ENCODE measurements at regions of chr2 and their contacts with region 1.

Region 1: DNA sequence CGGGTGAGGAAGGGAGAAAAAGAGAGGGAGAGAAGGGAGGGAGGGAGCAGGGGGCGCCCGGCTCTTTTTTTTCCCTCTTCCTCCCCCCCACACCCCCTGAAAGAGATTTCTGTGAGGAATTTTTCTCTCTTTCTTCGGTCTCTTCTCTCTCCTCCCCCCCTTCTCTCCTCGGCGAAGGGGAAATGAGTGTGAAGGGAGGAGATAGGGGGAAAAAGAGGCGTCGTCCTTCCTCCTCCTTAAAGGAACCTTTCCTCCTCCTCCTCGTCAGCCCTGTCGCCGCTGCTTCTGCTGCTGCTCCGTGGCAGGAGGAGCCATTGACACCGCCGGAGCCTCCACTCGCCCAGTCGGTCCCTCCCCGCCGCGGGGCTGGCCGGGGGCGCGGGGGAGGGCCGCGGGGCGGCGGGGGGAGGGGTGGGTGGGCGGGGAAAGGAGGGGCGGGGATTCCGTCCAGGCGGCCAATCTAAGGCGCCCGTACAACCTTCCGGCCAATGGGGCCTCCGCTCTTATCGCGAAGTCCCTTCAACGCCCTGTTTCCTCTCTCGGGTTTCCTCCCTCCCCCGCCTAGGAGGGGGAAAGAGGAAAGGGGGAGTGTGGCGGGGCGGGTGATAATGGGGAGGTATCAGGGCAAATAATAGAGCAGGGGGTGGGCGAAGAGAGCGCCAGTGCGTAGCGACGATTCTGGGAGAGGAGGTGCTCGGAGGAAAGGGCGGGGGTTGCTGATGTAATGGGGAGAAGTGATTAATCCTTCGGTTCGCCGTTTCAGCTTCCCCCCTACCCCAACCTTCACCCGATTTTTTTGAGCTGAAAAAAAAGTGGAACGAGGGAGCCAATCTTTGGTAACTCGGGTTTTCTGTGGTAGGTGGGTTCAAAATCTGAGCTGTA is at the start of gene FBXO11:
- DNase-seq: peak; percentile 98
- H3K4me3 Mint-ChIP-seq: peak within 1 kb of the TSS; percentile 91
- H3K27ac Mint-ChIP-seq: peak within 1 kb of the TSS; percentile 97
- H3K4me1 Mint-ChIP-seq: peaks cover 36% of the 10 kb centered on the region
- H3K27me3 Mint-ChIP-seq: no peaks in the 10 kb centered on the region
- total RNA-seq, gene FBXO11: 50.1 and 51.8 TPM in 2 replicates

Region 2: DNA sequence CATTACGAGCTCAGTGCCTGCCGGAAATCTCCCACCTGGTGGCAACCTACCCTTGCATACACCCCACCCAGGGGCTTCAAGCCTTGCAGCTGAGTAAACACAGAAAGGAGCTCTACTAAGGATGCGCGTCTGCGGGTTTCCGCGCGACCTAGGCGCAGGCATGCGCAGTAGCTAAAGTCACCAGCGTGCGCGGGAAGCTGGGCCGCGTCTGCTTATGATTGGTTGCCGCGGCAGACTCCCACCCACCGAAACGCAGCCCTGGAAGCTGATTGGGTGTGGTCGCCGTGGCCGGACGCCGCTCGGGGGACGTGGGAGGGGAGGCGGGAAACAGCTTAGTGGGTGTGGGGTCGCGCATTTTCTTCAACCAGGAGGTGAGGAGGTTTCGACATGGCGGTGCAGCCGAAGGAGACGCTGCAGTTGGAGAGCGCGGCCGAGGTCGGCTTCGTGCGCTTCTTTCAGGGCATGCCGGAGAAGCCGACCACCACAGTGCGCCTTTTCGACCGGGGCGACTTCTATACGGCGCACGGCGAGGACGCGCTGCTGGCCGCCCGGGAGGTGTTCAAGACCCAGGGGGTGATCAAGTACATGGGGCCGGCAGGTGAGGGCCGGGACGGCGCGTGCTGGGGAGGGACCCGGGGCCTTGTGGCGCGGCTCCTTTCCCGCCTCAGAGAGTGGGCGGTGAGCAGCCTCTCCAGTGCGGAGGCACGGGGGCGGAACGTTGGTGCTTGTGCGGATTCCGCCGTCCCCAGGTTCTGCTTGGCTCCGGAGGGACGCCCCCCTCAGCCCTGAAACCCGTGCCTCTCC is 503.4 kb before region 1 on chr2 and contains the start of gene MSH2:
- intact Hi-C with region 1: loop called (anchors 2 kb)
- DNase-seq: peak; percentile 98
- H3K4me3 Mint-ChIP-seq: peak within 1 kb of the TSS; percentile 97
- H3K27ac Mint-ChIP-seq: peak within 1 kb of the TSS; percentile 96
- H3K4me1 Mint-ChIP-seq: peaks cover 31% of the 10 kb centered on the region
- H3K27me3 Mint-ChIP-seq: no peaks in the 10 kb centered on the region
- total RNA-seq, gene MSH2: 79.7 and 79.8 TPM in 2 replicates

Region 3: GRCh38 chr2:47782671-47783485 is 123.5 kb before region 1 on chr2 and contains the start of gene MSH6:
- intact Hi-C with region 1: loop called (anchors 1 kb)
- DNase-seq: peak; percentile 97
- H3K4me3 Mint-ChIP-seq: peak within 1 kb of the TSS; percentile 90
- H3K27ac Mint-ChIP-seq: peak within 1 kb of the TSS; percentile 89
- H3K4me1 Mint-ChIP-seq: peaks cover 14% of the 10 kb centered on the region
- H3K27me3 Mint-ChIP-seq: no peaks in the 10 kb centered on the region
- total RNA-seq, gene MSH6: 148 and 153 TPM in 2 replicates

Region 4: DNA sequence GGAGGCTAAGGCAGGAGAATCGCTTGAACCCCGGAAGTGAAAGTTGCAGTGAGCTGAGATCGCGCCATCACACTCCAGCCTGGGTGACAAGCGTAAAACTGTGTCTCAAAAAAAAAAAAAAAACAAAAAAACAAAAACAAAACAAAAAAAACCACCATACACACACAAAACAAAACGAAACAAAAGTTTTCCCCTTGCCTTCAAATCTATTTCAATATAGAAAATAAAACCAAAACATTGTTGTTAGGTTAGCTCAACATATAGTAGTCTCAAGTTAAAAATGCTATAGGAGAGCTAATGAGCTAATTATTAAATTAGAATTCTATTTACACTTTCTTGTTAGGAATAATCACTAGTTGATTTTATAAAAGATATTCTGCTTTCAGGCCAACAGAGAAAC is 43.4 kb before region 1 on chr2:
- intact Hi-C with region 1: loop called (anchors 5 kb)
- DNase-seq: no peak
- H3K4me3 Mint-ChIP-seq: no peak overlapping the region
- H3K27ac Mint-ChIP-seq: no peak overlapping the region
- H3K4me1 Mint-ChIP-seq: peaks cover 13% of the 10 kb centered on the region
- H3K27me3 Mint-ChIP-seq: no peaks in the 10 kb centered on the region

Region 5: GRCh38 chr2:47869859-47870258 is 36.5 kb before region 1 on chr2:
- intact Hi-C with region 1: loop called (anchors 5 kb)
- DNase-seq: no peak
- H3K4me3 Mint-ChIP-seq: no peak overlapping the region
- H3K27ac Mint-ChIP-seq: no peak overlapping the region
- H3K4me1 Mint-ChIP-seq: peaks cover 36% of the 10 kb centered on the region
- H3K27me3 Mint-ChIP-seq: no peaks in the 10 kb centered on the region

Region 6: DNA sequence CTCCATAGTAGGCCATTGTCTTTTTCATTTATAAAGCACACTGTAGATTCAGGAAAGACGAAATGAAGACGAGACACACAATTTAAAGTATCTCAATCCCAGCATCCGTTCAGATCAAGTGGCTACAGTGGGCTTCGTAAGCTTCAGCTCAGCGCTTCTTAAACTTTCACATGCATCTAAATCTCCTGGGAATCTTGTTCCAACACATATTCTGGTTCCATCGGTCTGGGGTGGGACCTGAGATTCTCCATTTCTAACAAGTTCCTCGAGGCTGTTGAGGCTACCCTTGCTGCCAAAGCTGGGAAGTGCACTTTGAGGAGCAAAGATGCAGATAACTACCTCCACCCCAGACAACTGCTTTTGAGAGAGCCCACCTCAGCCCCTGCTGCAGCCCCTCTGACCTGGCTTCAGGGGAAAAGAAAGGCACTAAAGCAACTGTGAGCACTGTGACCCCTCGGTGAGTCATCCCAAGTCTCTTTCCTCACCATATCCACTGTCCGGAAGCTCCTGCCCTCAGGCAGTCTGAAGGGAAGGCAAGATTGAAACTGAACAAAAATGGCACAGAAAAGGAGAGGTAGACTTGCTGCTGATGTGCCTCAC is 201.0 kb after region 1 on chr2:
- intact Hi-C with region 1: loop called (anchors 1 kb)
- DNase-seq: no peak
- H3K4me3 Mint-ChIP-seq: no peak overlapping the region
- H3K27ac Mint-ChIP-seq: no peak overlapping the region
- H3K4me1 Mint-ChIP-seq: peaks cover 19% of the 10 kb centered on the region
- H3K27me3 Mint-ChIP-seq: peaks cover 12% of the 10 kb centered on the region

Region 7: GRCh38 chr2:48420512-48421197 is 514.3 kb after region 1 on chr2:
- intact Hi-C with region 1: loop called (anchors 2 kb)
- DNase-seq: peak; percentile 98
- H3K4me3 Mint-ChIP-seq: peak overlapping the region; percentile 41
- H3K27ac Mint-ChIP-seq: peak overlapping the region; percentile 77
- H3K4me1 Mint-ChIP-seq: peaks cover 36% of the 10 kb centered on the region
- H3K27me3 Mint-ChIP-seq: no peaks in the 10 kb centered on the region

Region 8: GRCh38 chr2:49569176-49569575 is 1662.8 kb after region 1 on chr2:
- intact Hi-C with region 1: no loop called
- DNase-seq: no peak
- H3K4me3 Mint-ChIP-seq: no peak overlapping the region
- H3K27ac Mint-ChIP-seq: no peak overlapping the region
- H3K4me1 Mint-ChIP-seq: no peaks in the 10 kb centered on the region
- H3K27me3 Mint-ChIP-seq: no peaks in the 10 kb centered on the region

Measured in activated CD4-positive, alpha-beta T cell treated with anti-CD3 and anti-CD28 coated beads, Interleukin-2, amount 10 ng/mL, durations not matched to agents 24 days and 14 days (primary cell).